ENCODE measurements at regions of chr15 and their contacts with region 1.

Region 1: GRCh38 chr15:44728576-44729407 is 7.5 kb upstream of the TRIM69 start:
- DNase-seq: peak; percentile 98
- ATAC-seq: peak; percentile 77
- H3K4me3 ChIP-seq: peak overlapping the region; percentile 62 to 94 (median 88)
- H3K4me3 Mint-ChIP-seq: peak overlapping the region; percentile 99
- H3K27ac ChIP-seq: peak overlapping the region; percentile 94 to 95
- H3K27ac Mint-ChIP-seq: peak overlapping the region; percentile 99
- H3K4me1 ChIP-seq: peaks cover 61 to 70% of the 10 kb centered on the region in 2 donors
- H3K4me1 Mint-ChIP-seq: peaks cover 74% of the 10 kb centered on the region
- H3K27me3 ChIP-seq: no peaks in the 10 kb centered on the region
- H3K27me3 Mint-ChIP-seq: no peaks in the 10 kb centered on the region
- CTCF ChIP-seq: no peak

Region 2: GRCh38 chr15:44347495-44347894 is 381.3 kb before region 1 on chr15:
- CTCF ChIA-PET with region 1: no interaction called
- POLR2A ChIA-PET with region 1: no interaction called
- intact Hi-C with region 1: no loop called
- DNase-seq: no peak
- ATAC-seq: no peak
- H3K4me3 ChIP-seq: no peak overlapping the region
- H3K4me3 Mint-ChIP-seq: no peak overlapping the region
- H3K27ac ChIP-seq: no peak overlapping the region
- H3K27ac Mint-ChIP-seq: no peak overlapping the region
- H3K4me1 ChIP-seq: no peaks in the 10 kb centered on the region
- H3K4me1 Mint-ChIP-seq: no peaks in the 10 kb centered on the region
- H3K27me3 ChIP-seq: no peaks in the 10 kb centered on the region
- H3K27me3 Mint-ChIP-seq: no peaks in the 10 kb centered on the region
- CTCF ChIP-seq: no peak

Region 3: GRCh38 chr15:44426975-44427755 is 301.6 kb before region 1 on chr15 and contains the start of gene CTDSPL2:
- CTCF ChIA-PET with region 1: no interaction called
- POLR2A ChIA-PET with region 1: no interaction called
- intact Hi-C with region 1: loop called (anchors 5 kb)
- DNase-seq: peak; percentile 94
- ATAC-seq: peak; percentile 97
- H3K4me3 ChIP-seq: peak within 1 kb of the TSS; percentile 93 to 100 (median 98)
- H3K4me3 Mint-ChIP-seq: peak within 1 kb of the TSS; percentile 96
- H3K27ac ChIP-seq: peak within 1 kb of the TSS; percentile 95 to 98
- H3K27ac Mint-ChIP-seq: peak within 1 kb of the TSS; percentile 98
- H3K4me1 ChIP-seq: peaks cover 18 to 23% of the 10 kb centered on the region in 2 donors
- H3K4me1 Mint-ChIP-seq: peaks cover 46% of the 10 kb centered on the region
- H3K27me3 ChIP-seq: no peaks in the 10 kb centered on the region
- H3K27me3 Mint-ChIP-seq: no peaks in the 10 kb centered on the region
- CTCF ChIP-seq: peak; percentile 34
- total RNA-seq, gene CTDSPL2: 79.5 and 84.1 TPM in 2 replicates

Region 4: GRCh38 chr15:44536962-44537734 is 191.6 kb before region 1 on chr15 and contains the start of gene EIF3J:
- CTCF ChIA-PET with region 1: no interaction called
- POLR2A ChIA-PET with region 1: interaction called, 3 read pairs
- intact Hi-C with region 1: loop called (anchors 2 kb)
- DNase-seq: peak; percentile 97
- ATAC-seq: peak; percentile 89
- H3K4me3 ChIP-seq: peak within 1 kb of the TSS; percentile 82 to 99 (median 92)
- H3K4me3 Mint-ChIP-seq: peak within 1 kb of the TSS; percentile 93
- H3K27ac ChIP-seq: peak within 1 kb of the TSS; percentile 83 to 94
- H3K27ac Mint-ChIP-seq: peak within 1 kb of the TSS; percentile 98
- H3K4me1 ChIP-seq: peaks cover 15 to 21% of the 10 kb centered on the region in 2 donors
- H3K4me1 Mint-ChIP-seq: peaks cover 40% of the 10 kb centered on the region
- H3K27me3 ChIP-seq: no peaks in the 10 kb centered on the region
- H3K27me3 Mint-ChIP-seq: no peaks in the 10 kb centered on the region
- CTCF ChIP-seq: no peak
- total RNA-seq, gene EIF3J: 61.0 and 66.7 TPM in 2 replicates

Region 5: DNA sequence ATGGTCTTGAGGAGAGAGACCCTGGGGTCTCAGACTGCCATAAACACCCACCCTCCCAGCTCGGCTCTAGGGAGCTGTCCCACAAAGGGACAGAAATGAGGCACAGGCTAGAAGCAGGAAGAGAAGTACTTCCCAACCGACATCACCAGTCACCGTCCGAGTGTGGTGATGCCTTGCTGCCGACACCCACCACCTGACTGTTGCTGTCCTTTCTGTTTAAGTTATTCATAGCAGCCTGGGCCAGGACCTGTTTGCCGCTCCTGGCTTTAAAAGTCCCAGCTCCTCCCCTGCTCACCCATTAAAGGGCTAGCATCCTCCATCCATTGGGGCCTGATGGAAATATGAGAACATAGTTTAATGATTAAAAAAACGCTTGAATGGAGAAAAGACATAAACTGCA is 52.1 kb before region 1 on chr15:
- CTCF ChIA-PET with region 1: interaction called, 3 read pairs
- POLR2A ChIA-PET with region 1: interaction called, 819 read pairs
- intact Hi-C with region 1: no loop called
- DNase-seq: peak; percentile 34
- ATAC-seq: peak; percentile 46
- H3K4me3 ChIP-seq: peak overlapping the region in 2 of 5 experiments; percentile 13 to 26
- H3K4me3 Mint-ChIP-seq: peak overlapping the region; percentile 75
- H3K27ac ChIP-seq: peak overlapping the region; percentile 80 to 87
- H3K27ac Mint-ChIP-seq: peak overlapping the region; percentile 91
- H3K4me1 ChIP-seq: peaks cover 69 to 77% of the 10 kb centered on the region in 2 donors
- H3K4me1 Mint-ChIP-seq: peaks cover 80% of the 10 kb centered on the region
- H3K27me3 ChIP-seq: no peaks in the 10 kb centered on the region
- H3K27me3 Mint-ChIP-seq: no peaks in the 10 kb centered on the region
- CTCF ChIP-seq: no peak

Region 6: DNA sequence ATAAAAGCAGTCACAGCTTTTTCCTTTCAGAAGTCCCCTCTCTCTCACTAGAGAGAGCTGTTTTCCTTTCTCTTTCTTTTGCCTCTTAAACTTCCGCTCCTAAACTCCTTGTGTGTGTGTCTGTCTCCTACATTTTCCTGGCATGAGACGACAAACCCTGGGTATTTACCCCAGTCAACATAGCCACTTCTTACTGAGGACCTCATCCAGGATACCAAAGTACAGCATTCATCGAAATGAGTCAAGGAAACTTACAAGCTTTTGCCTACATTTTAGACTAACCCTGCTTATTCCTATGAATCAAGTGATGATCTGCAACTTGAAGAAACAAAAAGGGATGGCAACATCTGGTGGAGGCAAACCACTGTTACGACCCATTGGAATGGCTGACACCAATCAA is 34.4 kb before region 1 on chr15:
- CTCF ChIA-PET with region 1: no interaction called
- POLR2A ChIA-PET with region 1: no interaction called
- intact Hi-C with region 1: no loop called
- DNase-seq: no peak
- ATAC-seq: no peak
- H3K4me3 ChIP-seq: no peak overlapping the region
- H3K4me3 Mint-ChIP-seq: no peak overlapping the region
- H3K27ac ChIP-seq: no peak overlapping the region
- H3K27ac Mint-ChIP-seq: no peak overlapping the region
- H3K4me1 ChIP-seq: peaks cover 5 to 6% of the 10 kb centered on the region in 2 donors
- H3K4me1 Mint-ChIP-seq: peaks cover 6% of the 10 kb centered on the region
- H3K27me3 ChIP-seq: no peaks in the 10 kb centered on the region
- H3K27me3 Mint-ChIP-seq: no peaks in the 10 kb centered on the region
- CTCF ChIP-seq: no peak

Measured in B cell (primary cell).